ENCODE measurements at regions of chr2 and their contacts with region 1.

Region 1: GRCh38 chr2:239267288-239267951 is 133.4 kb downstream of the HDAC4 start:
- DNase-seq: peak; percentile 73 to 98 (median 93)
- ATAC-seq: peak; percentile 70
- H3K4me3 ChIP-seq: peak overlapping the region; percentile 62 to 66
- H3K4me3 Mint-ChIP-seq: peak overlapping the region; percentile 90
- H3K27ac ChIP-seq: peak overlapping the region; percentile 75 to 86
- H3K27ac Mint-ChIP-seq: peak overlapping the region; percentile 95
- H3K4me1 ChIP-seq: peaks cover 66% of the 10 kb centered on the region
- H3K4me1 Mint-ChIP-seq: peaks cover 71% of the 10 kb centered on the region
- H3K27me3 ChIP-seq: no peaks in the 10 kb centered on the region
- H3K27me3 Mint-ChIP-seq: no peaks in the 10 kb centered on the region
- CTCF ChIP-seq: peak; percentile 64

Region 2: GRCh38 chr2:239230318-239231052 is 36.9 kb before region 1 on chr2:
- CTCF ChIA-PET with region 1: interaction called, 3 read pairs
- POLR2A ChIA-PET with region 1: interaction called, 3 read pairs
- intact Hi-C with region 1: loop called in 1 of 2 experiments (anchors 2 kb)
- DNase-seq: peak in 2 of 9 experiments; percentile 39 to 63
- ATAC-seq: peak; percentile 58
- H3K4me3 ChIP-seq: peak overlapping the region in 1 of 2 experiments; percentile 40
- H3K4me3 Mint-ChIP-seq: peak overlapping the region; percentile 64
- H3K27ac ChIP-seq: peak overlapping the region; percentile 40 to 59
- H3K27ac Mint-ChIP-seq: peak overlapping the region; percentile 86
- H3K4me1 ChIP-seq: peaks cover 59% of the 10 kb centered on the region
- H3K4me1 Mint-ChIP-seq: peaks cover 76% of the 10 kb centered on the region
- H3K27me3 ChIP-seq: no peaks in the 10 kb centered on the region
- H3K27me3 Mint-ChIP-seq: no peaks in the 10 kb centered on the region
- CTCF ChIP-seq: no peak

Region 3: GRCh38 chr2:239326831-239327535 is 59.6 kb after region 1 on chr2:
- CTCF ChIA-PET with region 1: interaction called, 4 read pairs
- POLR2A ChIA-PET with region 1: interaction called, 3 read pairs
- intact Hi-C with region 1: loop called in 1 of 2 experiments (anchors 2 kb)
- DNase-seq: peak; percentile 30 to 85 (median 74)
- ATAC-seq: peak; percentile 69
- H3K4me3 ChIP-seq: peak overlapping the region in 1 of 2 experiments; percentile 9
- H3K4me3 Mint-ChIP-seq: peak overlapping the region; percentile 36
- H3K27ac ChIP-seq: peak overlapping the region; percentile 34 to 44
- H3K27ac Mint-ChIP-seq: peak overlapping the region; percentile 91
- H3K4me1 ChIP-seq: peaks cover 84% of the 10 kb centered on the region
- H3K4me1 Mint-ChIP-seq: peaks cover 87% of the 10 kb centered on the region
- H3K27me3 ChIP-seq: no peaks in the 10 kb centered on the region
- H3K27me3 Mint-ChIP-seq: no peaks in the 10 kb centered on the region
- CTCF ChIP-seq: no peak

Region 4: GRCh38 chr2:239389414-239390329 is 122.3 kb after region 1 on chr2:
- CTCF ChIA-PET with region 1: interaction called, 11 read pairs
- POLR2A ChIA-PET with region 1: no interaction called
- intact Hi-C with region 1: loop called in 1 of 2 experiments (anchors 5 kb)
- DNase-seq: no peak
- ATAC-seq: no peak
- H3K4me3 ChIP-seq: no peak overlapping the region
- H3K4me3 Mint-ChIP-seq: no peak overlapping the region
- H3K27ac ChIP-seq: no peak overlapping the region
- H3K27ac Mint-ChIP-seq: no peak overlapping the region
- H3K4me1 ChIP-seq: no peaks in the 10 kb centered on the region
- H3K4me1 Mint-ChIP-seq: peaks cover 13% of the 10 kb centered on the region
- H3K27me3 ChIP-seq: no peaks in the 10 kb centered on the region
- H3K27me3 Mint-ChIP-seq: no peaks in the 10 kb centered on the region
- CTCF ChIP-seq: no peak

Region 5: DNA sequence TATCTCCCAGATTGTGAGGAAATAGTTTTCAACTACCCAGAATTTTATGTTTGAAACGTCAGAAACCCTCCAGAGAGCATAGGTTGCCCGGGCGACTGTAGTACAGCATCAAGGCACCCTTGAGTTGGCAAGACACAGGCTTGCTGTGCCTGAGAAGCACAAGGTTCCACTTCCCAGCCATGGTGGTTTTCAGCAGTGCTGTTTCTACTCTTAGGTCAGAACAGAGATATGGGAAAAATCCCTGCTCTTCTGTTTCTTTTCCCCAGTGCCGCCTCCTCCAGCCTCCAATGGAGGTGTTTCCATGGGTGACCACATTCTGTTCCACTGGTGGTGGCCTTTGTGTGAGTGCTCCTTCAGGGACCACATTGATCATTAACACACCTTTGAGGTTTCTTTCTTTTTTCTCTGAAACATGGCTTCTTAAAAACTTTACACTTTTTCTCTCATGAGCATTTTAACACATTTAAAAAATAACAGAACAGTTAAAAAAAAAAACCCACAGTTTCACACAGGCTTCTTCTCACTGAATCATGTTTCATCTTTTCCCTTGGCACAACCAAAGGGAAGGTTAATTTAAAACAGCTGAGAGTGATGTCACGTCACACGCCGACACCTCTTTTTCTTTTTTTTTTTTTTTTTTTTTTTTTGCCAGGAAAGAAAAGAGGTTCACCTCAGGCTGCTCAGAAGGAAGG is 362.7 kb after region 1 on chr2:
- CTCF ChIA-PET with region 1: no interaction called
- POLR2A ChIA-PET with region 1: no interaction called
- intact Hi-C with region 1: loop called in 1 of 2 experiments (anchors 10 kb)
- DNase-seq: peak in 2 of 9 experiments; percentile 26 to 75
- ATAC-seq: peak; percentile 34
- H3K4me3 ChIP-seq: no peak overlapping the region
- H3K4me3 Mint-ChIP-seq: no peak overlapping the region
- H3K27ac ChIP-seq: no peak overlapping the region
- H3K27ac Mint-ChIP-seq: no peak overlapping the region
- H3K4me1 ChIP-seq: peaks cover 24% of the 10 kb centered on the region
- H3K4me1 Mint-ChIP-seq: peaks cover 20% of the 10 kb centered on the region
- H3K27me3 ChIP-seq: no peaks in the 10 kb centered on the region
- H3K27me3 Mint-ChIP-seq: no peaks in the 10 kb centered on the region
- CTCF ChIP-seq: no peak

Region 6: DNA sequence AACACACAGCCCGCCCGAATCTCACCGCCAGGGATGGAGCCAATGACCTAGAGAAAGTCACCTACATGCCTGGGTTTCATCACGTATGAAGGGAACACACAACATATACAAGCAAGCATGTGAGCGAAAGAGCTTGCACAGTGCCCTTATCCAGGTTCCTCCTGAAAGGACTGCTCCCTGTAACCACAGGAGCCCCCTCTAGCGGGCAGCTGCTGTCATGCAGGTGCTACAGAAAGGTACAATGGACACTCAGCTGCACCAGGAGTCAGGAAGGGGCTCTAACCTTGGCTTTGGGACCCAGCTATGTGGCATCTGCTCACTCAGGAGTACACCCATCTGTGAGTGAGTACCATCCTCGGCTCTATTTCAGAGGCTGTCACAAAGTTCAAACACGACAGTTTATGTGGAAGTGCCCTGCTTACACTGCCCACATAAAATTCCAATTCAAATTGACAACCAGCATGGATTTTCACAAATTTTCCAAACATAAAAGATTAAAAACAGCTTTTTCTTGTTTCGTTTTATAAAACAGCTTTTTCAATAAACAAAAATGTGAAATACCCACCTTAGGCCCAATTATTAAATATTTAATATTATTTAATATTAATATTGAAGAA is 754.2 kb after region 1 on chr2:
- CTCF ChIA-PET with region 1: no interaction called
- POLR2A ChIA-PET with region 1: no interaction called
- intact Hi-C with region 1: loop called in 1 of 2 experiments (anchors 10 kb)
- DNase-seq: peak; percentile 15 to 72 (median 64)
- ATAC-seq: peak; percentile 35
- H3K4me3 ChIP-seq: no peak overlapping the region
- H3K4me3 Mint-ChIP-seq: no peak overlapping the region
- H3K27ac ChIP-seq: no peak overlapping the region
- H3K27ac Mint-ChIP-seq: no peak overlapping the region
- H3K4me1 ChIP-seq: peaks cover 14% of the 10 kb centered on the region
- H3K4me1 Mint-ChIP-seq: peaks cover 29% of the 10 kb centered on the region
- H3K27me3 ChIP-seq: no peaks in the 10 kb centered on the region
- H3K27me3 Mint-ChIP-seq: no peaks in the 10 kb centered on the region
- CTCF ChIP-seq: peak; percentile 82

Region 7: GRCh38 chr2:240128608-240129145 is 861.3 kb after region 1 on chr2:
- CTCF ChIA-PET with region 1: no interaction called
- POLR2A ChIA-PET with region 1: no interaction called
- intact Hi-C with region 1: no loop called
- DNase-seq: peak in 1 of 9 experiments; percentile 17
- ATAC-seq: no peak
- H3K4me3 ChIP-seq: no peak overlapping the region
- H3K4me3 Mint-ChIP-seq: no peak overlapping the region
- H3K27ac ChIP-seq: no peak overlapping the region
- H3K27ac Mint-ChIP-seq: no peak overlapping the region
- H3K4me1 ChIP-seq: no peaks in the 10 kb centered on the region
- H3K4me1 Mint-ChIP-seq: peaks cover 2% of the 10 kb centered on the region
- H3K27me3 ChIP-seq: no peaks in the 10 kb centered on the region
- H3K27me3 Mint-ChIP-seq: no peaks in the 10 kb centered on the region
- CTCF ChIP-seq: no peak